ENCODE measurements at regions of chr19 and their contacts with region 1.

Region 1: GRCh38 chr19:2962045-2962561 is 15.3 kb upstream of the TLE6 start:
- DNase-seq: peak in 1 of 2 donors; percentile 75
- H3K4me3 ChIP-seq: no peak overlapping the region
- H3K27ac ChIP-seq: no peak overlapping the region
- H3K4me1 ChIP-seq: no peaks in the 10 kb centered on the region
- H3K27me3 ChIP-seq: no peaks in the 10 kb centered on the region
- CTCF ChIP-seq: peak; percentile 72 to 93 (median 78)

Region 2: DNA sequence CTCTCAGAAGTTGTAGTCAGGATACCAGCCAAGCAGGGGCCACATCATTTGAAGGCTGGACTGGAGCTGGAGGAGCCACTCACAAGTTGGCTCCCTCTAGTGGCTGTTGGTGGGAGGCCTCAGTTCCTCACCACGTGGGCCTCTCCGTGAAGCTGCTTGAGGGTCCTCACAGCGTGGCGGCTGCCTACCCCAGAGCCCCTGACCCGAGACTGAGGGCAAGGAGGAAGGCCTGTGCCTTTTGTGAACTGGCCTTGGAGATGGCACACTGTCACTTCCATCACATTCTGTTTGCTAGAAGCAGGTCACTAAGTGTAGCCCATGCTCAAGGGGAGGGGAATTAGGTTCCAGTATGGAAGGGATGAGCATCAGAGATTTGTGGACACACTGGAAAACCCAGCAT is 146.7 kb after region 1 on chr19:
- intact Hi-C with region 1: loop called (anchors 5 kb)
- DNase-seq: no peak
- H3K4me3 ChIP-seq: no peak overlapping the region
- H3K27ac ChIP-seq: no peak overlapping the region
- H3K4me1 ChIP-seq: peaks cover 2 to 9% of the 10 kb centered on the region in 2 donors
- H3K27me3 ChIP-seq: no peaks in the 10 kb centered on the region
- CTCF ChIP-seq: peak; percentile 67 to 80 (median 74)